B cell (primary cell): ENCODE measurements at regions of chr4 and their contacts with region 1.

Region 1: GRCh38 chr4:15479089-15479912 is 9.6 kb downstream of the CC2D2A start:
- DNase-seq: peak; percentile 16
- ATAC-seq: no peak
- H3K4me3 ChIP-seq: no peak overlapping the region
- H3K4me3 Mint-ChIP-seq: no peak overlapping the region
- H3K27ac ChIP-seq: no peak overlapping the region
- H3K27ac Mint-ChIP-seq: no peak overlapping the region
- H3K4me1 ChIP-seq: no peaks in the 10 kb centered on the region
- H3K4me1 Mint-ChIP-seq: no peaks in the 10 kb centered on the region
- H3K27me3 ChIP-seq: no peaks in the 10 kb centered on the region
- H3K27me3 Mint-ChIP-seq: peaks cover 6% of the 10 kb centered on the region
- CTCF ChIP-seq: no peak

Region 2: DNA sequence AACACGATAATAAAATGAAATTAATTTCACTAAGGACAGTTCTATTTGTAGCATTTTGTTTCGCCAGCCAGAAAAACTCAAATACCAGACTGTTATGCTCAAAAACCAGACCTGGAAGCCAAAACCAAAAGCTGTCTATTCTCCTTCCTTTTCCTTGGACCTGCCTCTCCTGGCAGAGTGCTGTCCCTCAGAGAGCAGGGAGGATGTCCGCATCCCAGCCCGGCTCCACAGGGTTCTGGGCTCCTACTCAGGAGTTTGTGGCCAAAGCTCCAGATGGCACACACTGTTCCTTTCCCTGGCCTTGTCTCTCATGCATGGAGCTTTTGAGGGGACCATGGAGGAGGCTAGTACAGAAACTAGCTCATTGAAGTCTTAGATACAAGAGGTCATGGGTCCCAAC is 93.4 kb before region 1 on chr4:
- CTCF ChIA-PET with region 1: no interaction called
- POLR2A ChIA-PET with region 1: no interaction called
- intact Hi-C with region 1: no loop called
- DNase-seq: no peak
- ATAC-seq: no peak
- H3K4me3 ChIP-seq: no peak overlapping the region
- H3K4me3 Mint-ChIP-seq: no peak overlapping the region
- H3K27ac ChIP-seq: no peak overlapping the region
- H3K27ac Mint-ChIP-seq: no peak overlapping the region
- H3K4me1 ChIP-seq: no peaks in the 10 kb centered on the region
- H3K4me1 Mint-ChIP-seq: no peaks in the 10 kb centered on the region
- H3K27me3 ChIP-seq: no peaks in the 10 kb centered on the region
- H3K27me3 Mint-ChIP-seq: peaks cover 5% of the 10 kb centered on the region
- CTCF ChIP-seq: no peak

Region 3: GRCh38 chr4:16001484-16001858 is 522.2 kb after region 1 on chr4:
- CTCF ChIA-PET with region 1: no interaction called
- POLR2A ChIA-PET with region 1: no interaction called
- intact Hi-C with region 1: loop called (anchors 2 kb)
- DNase-seq: peak; percentile 68
- ATAC-seq: peak; percentile 81
- H3K4me3 ChIP-seq: no peak overlapping the region
- H3K4me3 Mint-ChIP-seq: no peak overlapping the region
- H3K27ac ChIP-seq: no peak overlapping the region
- H3K27ac Mint-ChIP-seq: no peak overlapping the region
- H3K4me1 ChIP-seq: no peaks in the 10 kb centered on the region
- H3K4me1 Mint-ChIP-seq: no peaks in the 10 kb centered on the region
- H3K27me3 ChIP-seq: no peaks in the 10 kb centered on the region
- H3K27me3 Mint-ChIP-seq: no peaks in the 10 kb centered on the region
- CTCF ChIP-seq: peak; percentile 82